GM12878 (cell line): ENCODE measurements at regions of chr5 and their contacts with region 1.

Region 1: GRCh38 chr5:14644623-14645237 is 19.8 kb upstream of the OTULIN start:
- DNase-seq: no peak
- ATAC-seq: no peak
- H3K4me3 ChIP-seq: no peak overlapping the region
- H3K27ac ChIP-seq: no peak overlapping the region
- H3K4me1 ChIP-seq: no peaks in the 10 kb centered on the region
- H3K27me3 ChIP-seq: no peaks in the 10 kb centered on the region
- CTCF ChIP-seq: no peak
- EP300 ChIP-seq: no peak
- POLR2A ChIP-seq: no peak
- RAD21 ChIP-seq: no peak

Region 2: GRCh38 chr5:13987843-13988464 is 656.8 kb before region 1 on chr5:
- CTCF ChIA-PET with region 1: interaction called, 32 read pairs
- POLR2A ChIA-PET with region 1: no interaction called
- RAD21 ChIA-PET with region 1: interaction called, 8 read pairs
- SMC1A ChIA-PET with region 1: interaction called, 6 read pairs
- in situ Hi-C with region 1: loop called (anchors 5 kb)
- intact Hi-C with region 1: loop called (anchors 2 kb)
- DNase-seq: no peak
- ATAC-seq: peak; percentile 84
- H3K4me3 ChIP-seq: no peak overlapping the region
- H3K27ac ChIP-seq: no peak overlapping the region
- H3K4me1 ChIP-seq: no peaks in the 10 kb centered on the region
- H3K27me3 ChIP-seq: peaks cover 0 to 2% of the 10 kb centered on the region in 2 experiments; a peak in 1 of 4 replicates
- CTCF ChIP-seq: peak; percentile 70 to 89 (median 83)
- EP300 ChIP-seq: no peak
- POLR2A ChIP-seq: no peak
- RAD21 ChIP-seq: peak; percentile 97

Region 3: GRCh38 chr5:14399054-14399692 is 245.6 kb before region 1 on chr5:
- CTCF ChIA-PET with region 1: interaction called, 59 read pairs
- POLR2A ChIA-PET with region 1: no interaction called
- RAD21 ChIA-PET with region 1: interaction called, 25 read pairs
- SMC1A ChIA-PET with region 1: interaction called, 29 read pairs
- in situ Hi-C with region 1: loop called (anchors 10 kb)
- intact Hi-C with region 1: loop called (anchors 1 kb)
- DNase-seq: no peak
- ATAC-seq: peak; percentile 71
- H3K4me3 ChIP-seq: no peak overlapping the region
- H3K27ac ChIP-seq: no peak overlapping the region
- H3K4me1 ChIP-seq: no peaks in the 10 kb centered on the region
- H3K27me3 ChIP-seq: no peaks in the 10 kb centered on the region
- CTCF ChIP-seq: peak; percentile 50 to 62 (median 56)
- EP300 ChIP-seq: no peak
- POLR2A ChIP-seq: no peak
- RAD21 ChIP-seq: peak; percentile 84

Region 4: GRCh38 chr5:14510156-14510734 is 134.5 kb before region 1 on chr5:
- CTCF ChIA-PET with region 1: interaction called, 5 read pairs
- POLR2A ChIA-PET with region 1: no interaction called
- RAD21 ChIA-PET with region 1: interaction called, 3 read pairs
- SMC1A ChIA-PET with region 1: no interaction called
- in situ Hi-C with region 1: no loop called
- intact Hi-C with region 1: loop called (anchors 5 kb)
- DNase-seq: no peak
- ATAC-seq: peak; percentile 10; the same call in 2 of the 3 replicates
- H3K4me3 ChIP-seq: no peak overlapping the region
- H3K27ac ChIP-seq: no peak overlapping the region
- H3K4me1 ChIP-seq: no peaks in the 10 kb centered on the region
- H3K27me3 ChIP-seq: no peaks in the 10 kb centered on the region
- CTCF ChIP-seq: no peak
- EP300 ChIP-seq: no peak
- POLR2A ChIP-seq: no peak
- RAD21 ChIP-seq: no peak

Region 5: GRCh38 chr5:14664302-14665100 is 19.8 kb after region 1 on chr5 and contains the start of gene OTULIN:
- CTCF ChIA-PET with region 1: interaction called, 14 read pairs
- POLR2A ChIA-PET with region 1: interaction called, 3 read pairs
- RAD21 ChIA-PET with region 1: interaction called, 7 read pairs
- SMC1A ChIA-PET with region 1: interaction called, 29 read pairs
- in situ Hi-C with region 1: no loop called
- intact Hi-C with region 1: no loop called
- DNase-seq: peak; percentile 80
- ATAC-seq: peak; percentile 74
- H3K4me3 ChIP-seq: peak within 1 kb of the TSS; percentile 84
- H3K27ac ChIP-seq: peak within 1 kb of the TSS; percentile 90
- H3K4me1 ChIP-seq: peaks cover 3% of the 10 kb centered on the region
- H3K27me3 ChIP-seq: no peaks in the 10 kb centered on the region
- CTCF ChIP-seq: no peak
- EP300 ChIP-seq: 0 out of 4 replicates have a peak, but pooled peaks of 1 of the 2 experiments have one; percentile 9
- POLR2A ChIP-seq: peak; percentile 95
- RAD21 ChIP-seq: no peak
- polyA plus RNA-seq, gene OTULIN: 6.6 to 9.9 TPM

Region 6: DNA sequence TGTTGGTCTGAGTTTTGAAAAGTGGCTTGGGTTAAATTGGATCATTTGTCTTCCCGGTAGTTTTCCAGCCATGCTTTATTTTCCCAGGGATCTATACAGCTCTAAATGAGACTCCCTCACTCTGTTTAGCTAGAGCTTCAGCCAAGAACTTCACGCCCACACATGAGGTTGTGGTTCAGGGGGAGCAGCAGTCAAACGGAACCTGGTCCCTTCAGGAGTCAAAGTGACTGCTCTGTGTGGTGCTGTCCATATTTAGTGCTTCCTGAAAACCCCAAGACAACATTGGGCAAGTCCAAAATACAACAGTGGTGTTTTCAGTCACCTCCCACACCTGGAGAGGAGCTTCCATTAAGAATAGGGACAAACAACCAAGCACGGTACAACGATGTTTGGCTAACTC is 136.4 kb after region 1 on chr5:
- CTCF ChIA-PET with region 1: no interaction called
- POLR2A ChIA-PET with region 1: no interaction called
- RAD21 ChIA-PET with region 1: no interaction called
- SMC1A ChIA-PET with region 1: no interaction called
- in situ Hi-C with region 1: no loop called
- intact Hi-C with region 1: no loop called
- DNase-seq: no peak
- ATAC-seq: peak; percentile 46; the same call in 2 of the 3 replicates
- H3K4me3 ChIP-seq: no peak overlapping the region
- H3K27ac ChIP-seq: no peak overlapping the region
- H3K4me1 ChIP-seq: peaks cover 11% of the 10 kb centered on the region
- H3K27me3 ChIP-seq: no peaks in the 10 kb centered on the region
- CTCF ChIP-seq: no peak
- EP300 ChIP-seq: no peak
- POLR2A ChIP-seq: no peak
- RAD21 ChIP-seq: no peak